HepG2 (cell line): ENCODE measurements at regions of chr3 and their contacts with region 1.

Region 1: GRCh38 chr3:122383771-122384697 is at the start of gene FAM162A:
- DNase-seq: peak; percentile 90
- ATAC-seq: peak; percentile 97
- H3K4me3 ChIP-seq: peak within 1 kb of the TSS; percentile 83 to 96 (median 84)
- H3K27ac ChIP-seq: peak within 1 kb of the TSS; percentile 88
- H3K4me1 ChIP-seq: peaks cover 73% of the 10 kb centered on the region
- H3K27me3 ChIP-seq: no peaks in the 10 kb centered on the region; a peak in 1 of 5 replicates
- CTCF ChIP-seq: peak; percentile 96
- EP300 ChIP-seq: 0 out of 4 replicates have a peak, but pooled peaks of 1 of the 2 experiments have one; percentile 20
- POLR2A ChIP-seq: peak; percentile 87 to 95
- RAD21 ChIP-seq: peak; percentile 84
- total RNA-seq, gene FAM162A: 115 and 131 TPM in 2 replicates

Region 2: DNA sequence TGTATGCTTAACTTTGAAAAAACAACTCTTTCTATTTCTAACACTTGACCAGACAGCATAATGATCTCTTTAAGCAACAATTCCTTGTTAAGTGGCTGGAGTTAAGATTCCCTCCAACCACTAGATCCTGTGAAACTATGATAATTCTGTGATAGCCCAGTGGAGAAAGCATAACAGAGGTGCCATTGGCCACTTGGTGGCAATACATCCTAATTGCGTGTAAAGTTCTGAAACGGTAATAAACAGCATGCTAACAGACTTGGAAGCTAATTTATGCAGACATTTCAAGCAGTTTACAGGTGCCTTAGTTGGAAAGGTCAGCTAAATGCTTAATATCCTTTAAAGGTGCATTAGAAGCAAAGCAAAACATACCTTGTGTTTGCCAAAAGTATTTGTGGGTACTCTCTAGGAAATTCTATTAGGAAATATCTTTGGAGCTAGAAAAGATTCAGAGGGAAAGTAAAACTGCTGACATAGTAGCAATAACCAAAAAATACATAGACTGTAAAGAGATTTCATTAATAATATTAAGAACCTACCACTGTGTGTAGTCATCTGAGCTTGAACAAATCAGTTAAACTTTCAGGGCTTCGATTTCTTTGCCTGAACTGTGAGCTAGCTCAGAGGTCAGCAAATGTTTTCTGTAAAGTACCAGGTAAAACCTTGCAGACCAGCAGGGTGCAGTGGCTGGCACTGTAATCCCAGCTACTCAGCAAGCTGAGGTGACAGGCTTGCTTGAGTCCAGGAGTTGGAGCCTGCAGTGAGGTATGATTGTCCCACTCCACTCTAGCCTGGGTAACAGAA is 78.0 kb before region 1 on chr3:
- CTCF ChIA-PET with region 1: interaction called, 8 read pairs
- POLR2A ChIA-PET with region 1: interaction called, 22 read pairs
- in situ Hi-C with region 1: no loop called
- intact Hi-C with region 1: loop called (anchors 1 kb)
- DNase-seq: peak; percentile 67
- ATAC-seq: peak; percentile 100
- H3K4me3 ChIP-seq: peak overlapping the region; percentile 28 to 49 (median 46); a peak in 5 of 6 replicates
- H3K27ac ChIP-seq: peak overlapping the region; percentile 8
- H3K4me1 ChIP-seq: peaks cover 31% of the 10 kb centered on the region
- H3K27me3 ChIP-seq: no peaks in the 10 kb centered on the region
- CTCF ChIP-seq: peak; percentile 80
- EP300 ChIP-seq: no peak
- POLR2A ChIP-seq: no peak
- RAD21 ChIP-seq: peak; percentile 45; the same call in 1 of the 2 replicates

Region 3: GRCh38 chr3:122365073-122365472 is 19.0 kb before region 1 on chr3:
- CTCF ChIA-PET with region 1: no interaction called
- POLR2A ChIA-PET with region 1: interaction called, 103 read pairs
- in situ Hi-C with region 1: no loop called
- intact Hi-C with region 1: loop called (anchors 1 kb)
- DNase-seq: no peak
- ATAC-seq: no peak; the same call in 2 of the 3 replicates
- H3K4me3 ChIP-seq: no peak overlapping the region
- H3K27ac ChIP-seq: peak overlapping the region; percentile 96
- H3K4me1 ChIP-seq: peaks cover 71% of the 10 kb centered on the region
- H3K27me3 ChIP-seq: no peaks in the 10 kb centered on the region
- CTCF ChIP-seq: no peak
- EP300 ChIP-seq: no peak
- POLR2A ChIP-seq: no peak
- RAD21 ChIP-seq: no peak

Region 4: DNA sequence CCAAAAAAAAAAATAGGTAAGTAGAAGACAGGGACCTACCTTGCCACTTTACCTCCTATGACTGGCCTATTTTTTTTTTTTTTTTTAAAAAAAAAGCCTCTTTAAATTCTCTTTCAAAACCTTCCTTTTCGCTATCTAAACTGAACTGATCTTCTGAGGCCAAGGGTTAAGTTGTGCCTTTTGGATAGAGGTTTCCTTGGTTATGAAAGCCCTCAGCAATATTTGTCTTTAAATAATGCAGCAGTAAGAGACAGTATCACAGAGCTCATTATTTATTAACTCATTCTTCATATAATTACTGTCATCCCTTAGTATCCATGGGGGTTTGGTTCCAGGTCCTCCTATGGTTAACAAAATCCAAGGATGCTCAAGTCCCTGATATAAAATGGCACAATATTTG is 10.0 kb before region 1 on chr3:
- CTCF ChIA-PET with region 1: no interaction called
- POLR2A ChIA-PET with region 1: interaction called, 103 read pairs
- in situ Hi-C with region 1: no loop called
- intact Hi-C with region 1: no loop called
- DNase-seq: no peak
- ATAC-seq: no peak
- H3K4me3 ChIP-seq: no peak overlapping the region
- H3K27ac ChIP-seq: no peak overlapping the region
- H3K4me1 ChIP-seq: peaks cover 67% of the 10 kb centered on the region
- H3K27me3 ChIP-seq: no peaks in the 10 kb centered on the region
- CTCF ChIP-seq: no peak
- EP300 ChIP-seq: no peak
- POLR2A ChIP-seq: no peak
- RAD21 ChIP-seq: no peak

Region 5: DNA sequence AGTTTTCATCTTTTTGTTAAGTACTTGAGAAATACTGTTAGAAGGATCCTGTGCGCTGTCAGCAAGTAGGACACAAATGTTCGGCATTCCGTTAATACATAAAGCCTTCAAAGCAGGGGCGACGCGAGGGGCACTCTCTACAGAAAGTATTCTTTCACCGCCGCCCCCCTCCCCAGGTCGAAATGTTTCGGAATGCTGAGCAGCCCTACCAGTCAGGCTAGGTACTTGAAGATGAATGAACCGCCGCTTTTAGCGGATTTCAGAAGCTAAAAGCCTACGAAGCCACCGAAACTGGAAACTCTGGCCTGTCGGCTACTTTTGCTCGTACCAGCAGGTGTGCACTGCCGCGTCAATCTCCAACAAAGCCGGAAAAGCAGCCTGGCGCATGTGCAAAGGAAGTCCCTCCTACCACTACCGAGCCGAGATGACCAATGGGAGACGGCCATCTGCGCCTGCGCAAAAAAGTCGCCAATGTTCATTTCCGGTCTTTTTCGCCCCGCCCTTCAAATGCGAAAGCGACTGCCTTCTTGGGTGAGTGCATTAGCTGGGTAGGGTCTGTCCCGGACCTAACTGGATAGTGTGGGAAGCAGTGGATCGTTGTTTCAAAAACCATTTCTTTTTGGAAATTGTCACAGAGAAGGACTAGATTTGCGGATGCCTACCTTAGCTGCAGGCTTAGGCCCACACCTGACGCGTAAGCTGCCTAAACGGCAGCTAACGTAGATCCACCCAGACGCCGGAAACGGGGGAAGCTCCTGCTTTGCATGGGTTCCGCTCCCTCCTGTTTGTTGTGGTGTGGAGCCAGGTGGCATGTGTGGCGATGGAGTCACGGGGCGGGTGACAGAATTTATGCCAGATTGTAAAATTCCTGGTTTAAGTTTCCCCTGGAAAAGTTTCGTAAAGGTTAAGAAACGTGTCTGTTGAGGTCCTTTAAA is 32.0 kb after region 1 on chr3 and contains the start of gene WDR5B:
- CTCF ChIA-PET with region 1: no interaction called
- POLR2A ChIA-PET with region 1: interaction called, 48 read pairs
- in situ Hi-C with region 1: no loop called
- intact Hi-C with region 1: no loop called
- DNase-seq: peak; percentile 96
- ATAC-seq: peak; percentile 95
- H3K4me3 ChIP-seq: peak within 1 kb of the TSS; percentile 61 to 81 (median 81)
- H3K27ac ChIP-seq: peak within 1 kb of the TSS; percentile 89
- H3K4me1 ChIP-seq: peaks cover 33% of the 10 kb centered on the region
- H3K27me3 ChIP-seq: no peaks in the 10 kb centered on the region; a peak in 1 of 5 replicates
- CTCF ChIP-seq: no peak
- EP300 ChIP-seq: no peak
- POLR2A ChIP-seq: peak; percentile 90 to 97
- RAD21 ChIP-seq: peak; percentile 35; the same call in 1 of the 2 replicates
- total RNA-seq, gene WDR5B: 3.6 and 4.5 TPM in 2 replicates